ENCODE measurements at regions of chr9 and their contacts with region 1.

Region 1: DNA sequence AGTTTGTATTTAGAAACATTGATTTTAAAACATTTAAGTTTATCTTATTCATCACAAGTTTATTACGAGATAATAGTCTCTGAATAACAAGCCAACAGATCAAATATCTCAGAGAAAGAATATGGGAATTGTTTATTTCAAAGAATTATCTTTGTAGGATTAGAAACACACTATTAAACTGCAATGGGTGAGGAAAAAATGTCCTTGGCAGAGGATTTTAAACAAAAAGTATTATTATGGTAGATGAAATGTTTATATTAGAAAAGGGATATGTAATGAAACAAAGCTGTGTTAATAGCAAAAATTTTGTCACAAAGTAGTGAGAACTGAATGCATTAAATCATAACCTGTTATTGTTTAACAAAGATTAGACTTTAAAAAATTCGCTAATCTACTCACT is 1382.9 kb upstream of the DMAC1 start:
- DNase-seq: no peak
- ATAC-seq: no peak
- H3K4me3 ChIP-seq: no peak overlapping the region
- H3K4me3 Mint-ChIP-seq: no peak overlapping the region
- H3K27ac ChIP-seq: no peak overlapping the region
- H3K27ac Mint-ChIP-seq: no peak overlapping the region
- H3K4me1 ChIP-seq: no peaks in the 10 kb centered on the region
- H3K4me1 Mint-ChIP-seq: no peaks in the 10 kb centered on the region
- H3K27me3 ChIP-seq: no peaks in the 10 kb centered on the region
- H3K27me3 Mint-ChIP-seq: no peaks in the 10 kb centered on the region
- CTCF ChIP-seq: no peak

Region 2: DNA sequence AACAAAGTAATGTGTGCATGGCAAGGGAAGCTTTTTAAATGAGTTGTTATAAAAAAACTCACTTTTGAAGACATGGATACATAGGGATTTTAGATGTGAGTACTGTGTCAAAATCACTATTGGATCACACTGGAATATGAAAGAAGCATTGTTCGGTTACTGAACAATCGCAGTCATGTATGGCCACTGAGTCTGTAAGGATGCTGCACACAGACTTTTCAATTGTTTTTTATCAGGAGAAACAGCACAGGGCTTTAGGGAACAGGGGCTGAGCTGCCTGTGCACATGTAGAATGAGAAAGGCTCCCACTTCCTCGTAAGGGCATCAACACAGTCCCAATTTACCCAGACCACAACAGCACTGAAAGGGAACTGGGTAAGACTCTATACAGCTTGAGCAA is 48.9 kb before region 1 on chr9:
- CTCF ChIA-PET with region 1: no interaction called
- POLR2A ChIA-PET with region 1: no interaction called
- intact Hi-C with region 1: loop called in 1 of 2 experiments (anchors 5 kb)
- DNase-seq: no peak
- ATAC-seq: no peak
- H3K4me3 ChIP-seq: no peak overlapping the region
- H3K4me3 Mint-ChIP-seq: no peak overlapping the region
- H3K27ac ChIP-seq: no peak overlapping the region
- H3K27ac Mint-ChIP-seq: no peak overlapping the region
- H3K4me1 ChIP-seq: no peaks in the 10 kb centered on the region
- H3K4me1 Mint-ChIP-seq: no peaks in the 10 kb centered on the region
- H3K27me3 ChIP-seq: no peaks in the 10 kb centered on the region
- H3K27me3 Mint-ChIP-seq: no peaks in the 10 kb centered on the region
- CTCF ChIP-seq: no peak

Region 3: GRCh38 chr9:9142001-9142400 is 40.4 kb before region 1 on chr9:
- CTCF ChIA-PET with region 1: no interaction called
- POLR2A ChIA-PET with region 1: no interaction called
- intact Hi-C with region 1: loop called in 1 of 2 experiments (anchors 5 kb)
- DNase-seq: no peak
- ATAC-seq: no peak
- H3K4me3 ChIP-seq: no peak overlapping the region
- H3K4me3 Mint-ChIP-seq: no peak overlapping the region
- H3K27ac ChIP-seq: no peak overlapping the region
- H3K27ac Mint-ChIP-seq: no peak overlapping the region
- H3K4me1 ChIP-seq: no peaks in the 10 kb centered on the region
- H3K4me1 Mint-ChIP-seq: no peaks in the 10 kb centered on the region
- H3K27me3 ChIP-seq: no peaks in the 10 kb centered on the region
- H3K27me3 Mint-ChIP-seq: no peaks in the 10 kb centered on the region
- CTCF ChIP-seq: no peak